ENCODE measurements at regions of chr19 and their contacts with region 1.

Region 1: GRCh38 chr19:49580264-49581006 is at the start of gene NOSIP:
- DNase-seq: peak; percentile 98
- H3K4me3 Mint-ChIP-seq: peak within 1 kb of the TSS; percentile 89
- H3K27ac Mint-ChIP-seq: peak within 1 kb of the TSS; percentile 82
- H3K4me1 Mint-ChIP-seq: peaks cover 33% of the 10 kb centered on the region
- H3K27me3 Mint-ChIP-seq: no peaks in the 10 kb centered on the region
- total RNA-seq, gene NOSIP: 162 to 163 TPM

Region 2: DNA sequence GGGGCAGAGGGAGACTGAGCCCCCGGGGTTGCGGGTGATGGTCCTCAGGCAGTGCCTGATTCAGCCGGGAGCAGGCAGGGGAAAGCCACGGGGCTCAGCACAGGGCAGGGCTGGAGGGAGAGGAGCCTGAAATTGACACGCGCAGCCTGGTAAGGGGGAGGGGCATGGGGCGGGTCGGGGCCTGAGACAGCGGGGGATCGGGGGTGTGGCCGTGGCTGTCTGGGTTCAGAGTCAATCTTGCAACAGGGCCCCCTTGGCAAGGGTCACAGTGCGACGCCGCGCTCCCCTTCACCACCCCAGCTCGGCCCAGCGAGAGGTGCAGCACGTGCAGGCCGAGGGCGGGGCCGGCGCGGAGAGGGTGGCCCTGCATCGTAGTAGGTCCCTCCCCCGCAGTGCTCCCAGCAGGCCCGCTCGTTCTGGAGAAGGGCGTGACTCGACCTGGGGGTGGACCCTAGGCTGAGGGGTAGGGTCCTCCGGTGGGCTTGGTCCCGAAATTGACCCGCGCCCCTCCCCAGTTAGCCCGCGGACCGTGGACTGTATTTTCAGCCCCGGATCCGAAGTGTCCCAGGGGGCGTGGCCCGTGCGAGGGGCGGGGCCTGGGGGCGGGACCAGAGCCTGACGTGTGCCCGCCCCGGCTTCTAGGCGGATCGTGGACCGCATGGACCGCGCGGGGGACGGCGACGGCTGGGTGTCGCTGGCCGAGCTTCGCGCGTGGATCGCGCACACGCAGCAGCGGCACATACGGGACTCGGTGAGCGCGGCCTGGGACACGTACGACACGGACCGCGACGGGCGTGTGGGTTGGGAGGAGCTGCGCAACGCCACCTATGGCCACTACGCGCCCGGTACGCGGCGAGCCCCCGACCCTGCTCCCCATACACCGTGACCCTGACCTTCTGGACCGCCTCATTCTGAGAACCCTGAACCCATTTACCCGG is 46.6 kb before region 1 on chr19:
- CTCF ChIA-PET with region 1: interaction called, 5 read pairs
- POLR2A ChIA-PET with region 1: interaction called, 11 read pairs
- DNase-seq: peak; percentile 85
- H3K4me3 Mint-ChIP-seq: peak overlapping the region; percentile 76
- H3K27ac Mint-ChIP-seq: peak overlapping the region; percentile 31
- H3K4me1 Mint-ChIP-seq: peaks cover 26% of the 10 kb centered on the region
- H3K27me3 Mint-ChIP-seq: peaks cover 14% of the 10 kb centered on the region

Region 3: DNA sequence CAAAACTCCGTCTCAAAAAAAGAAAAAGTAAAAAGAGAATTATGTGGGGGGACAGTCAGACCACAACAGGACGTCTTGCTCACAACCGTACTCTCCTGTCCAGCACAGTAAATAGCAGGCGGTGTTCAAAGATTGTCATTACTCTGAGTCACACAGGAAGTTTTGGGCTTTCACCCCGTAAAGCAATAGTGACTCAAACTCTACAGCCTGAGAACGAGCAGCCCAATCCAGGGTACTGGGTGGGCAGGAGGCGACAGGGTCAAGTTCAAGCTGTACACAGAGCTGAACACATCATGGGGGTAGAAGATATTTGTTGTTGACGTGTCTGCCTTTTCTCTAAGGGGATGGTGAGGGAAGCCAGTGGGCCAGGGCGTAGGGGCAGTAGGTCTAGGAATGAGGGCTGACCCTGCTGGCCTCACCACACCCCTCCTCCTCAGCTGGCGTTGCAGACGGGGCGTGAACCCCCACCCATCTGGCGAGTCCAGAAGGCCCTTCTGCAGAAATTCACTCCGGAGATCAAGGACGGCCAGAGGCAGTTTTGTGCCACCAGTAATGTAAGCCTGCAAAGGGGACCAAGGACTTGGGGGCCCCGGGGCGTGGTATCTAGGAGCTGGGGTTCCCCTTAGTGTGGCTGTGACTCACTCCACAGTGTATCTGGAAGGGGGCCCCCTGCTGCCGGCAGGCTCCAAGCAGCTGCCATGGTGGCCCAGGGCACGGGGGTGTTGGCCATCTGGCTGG is 33.8 kb after region 1 on chr19:
- CTCF ChIA-PET with region 1: no interaction called
- POLR2A ChIA-PET with region 1: no interaction called
- DNase-seq: no peak
- H3K4me3 Mint-ChIP-seq: no peak overlapping the region
- H3K27ac Mint-ChIP-seq: peak overlapping the region; percentile 70
- H3K4me1 Mint-ChIP-seq: peaks cover 17% of the 10 kb centered on the region
- H3K27me3 Mint-ChIP-seq: no peaks in the 10 kb centered on the region

Region 4: DNA sequence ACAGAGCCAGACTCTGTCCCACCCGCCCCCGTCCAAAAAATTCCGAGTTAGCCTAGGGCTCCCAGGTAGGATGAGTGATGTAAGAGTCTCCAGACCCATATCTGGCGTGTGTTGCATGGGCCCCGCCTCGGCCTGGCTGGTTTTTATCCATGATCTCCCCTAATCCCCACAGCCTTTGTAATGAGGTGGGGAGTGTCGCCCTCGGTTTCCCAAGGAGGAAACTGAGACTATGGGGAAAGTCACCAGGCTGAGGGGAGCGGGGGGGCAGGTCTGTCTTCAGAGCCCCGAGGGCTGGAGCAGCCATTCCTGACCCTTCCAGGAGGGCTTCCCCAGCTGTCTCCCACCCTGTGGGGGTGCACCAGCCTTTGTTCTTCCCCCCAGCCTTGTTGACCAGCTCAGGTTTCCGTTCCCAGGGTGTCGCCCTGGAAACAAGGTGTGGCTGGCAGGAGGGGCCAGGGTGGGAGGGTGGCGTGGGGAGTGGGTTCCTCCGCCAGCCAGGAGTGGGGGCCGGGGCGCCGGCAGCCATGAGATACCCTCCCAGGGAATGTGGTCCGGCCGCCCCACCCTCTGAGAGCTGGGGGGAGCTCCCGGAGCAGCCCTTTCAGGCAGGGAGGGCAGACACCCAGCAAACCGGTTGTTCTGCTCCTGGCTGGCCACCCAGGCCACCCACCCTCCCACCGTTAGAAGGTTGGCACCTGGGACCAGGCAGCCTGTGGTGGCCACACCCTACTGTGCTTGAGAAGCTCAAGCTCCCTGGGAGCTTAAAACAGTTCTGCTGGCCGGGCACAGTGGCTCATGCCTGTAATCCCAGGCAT is 634.5 kb after region 1 on chr19:
- CTCF ChIA-PET with region 1: no interaction called
- POLR2A ChIA-PET with region 1: no interaction called
- DNase-seq: no peak
- H3K4me3 Mint-ChIP-seq: no peak overlapping the region
- H3K27ac Mint-ChIP-seq: no peak overlapping the region
- H3K4me1 Mint-ChIP-seq: no peaks in the 10 kb centered on the region
- H3K27me3 Mint-ChIP-seq: peaks cover 4% of the 10 kb centered on the region